ENCODE measurements at regions of chr7 and their contacts with region 1.

Region 1: DNA sequence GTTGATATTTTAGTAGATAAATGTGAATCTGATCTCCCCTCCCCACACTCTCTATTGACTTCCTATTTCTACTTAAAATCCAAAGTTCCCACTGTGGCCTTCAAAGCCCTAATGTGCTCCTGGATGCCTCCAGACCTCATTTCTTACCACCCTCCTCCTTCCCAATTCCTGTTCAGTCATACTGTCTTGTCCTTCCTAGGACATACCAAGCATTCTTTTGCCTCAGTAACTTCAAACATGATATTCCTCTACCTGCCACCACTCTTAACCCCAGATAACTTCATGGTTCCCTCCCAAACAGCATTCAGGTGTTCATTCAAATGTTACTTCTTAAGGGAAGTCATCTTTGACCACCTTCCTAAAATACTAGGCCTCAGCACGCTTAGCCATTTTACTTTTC is 34.2 kb upstream of the FAM221A start:
- DNase-seq: no peak
- H3K27ac ChIP-seq: no peak overlapping the region
- CTCF ChIP-seq: no peak

Region 2: DNA sequence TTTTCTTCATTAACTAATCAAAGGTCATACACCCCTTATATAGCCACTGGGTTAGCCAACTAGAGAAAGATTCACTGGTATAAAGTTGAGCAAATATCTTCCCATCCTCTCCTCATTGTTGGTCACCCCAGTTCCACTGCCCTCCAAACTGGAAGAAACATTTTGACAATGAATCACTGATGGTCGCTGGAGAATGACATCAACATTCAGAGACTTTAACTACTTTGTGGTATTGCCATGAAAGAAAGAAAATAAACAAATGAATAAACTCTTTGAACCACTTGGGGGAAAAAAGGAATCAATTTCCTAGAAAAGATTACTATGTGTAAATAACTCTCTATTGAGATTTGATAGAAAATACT is 655.3 kb before region 1 on chr7:
- CTCF ChIA-PET with region 1: no interaction called
- POLR2A ChIA-PET with region 1: interaction called, 18 read pairs
- DNase-seq: no peak
- H3K27ac ChIP-seq: no peak overlapping the region
- CTCF ChIP-seq: no peak

Region 3: GRCh38 chr7:23863209-23863798 is 217.5 kb after region 1 on chr7:
- CTCF ChIA-PET with region 1: no interaction called
- POLR2A ChIA-PET with region 1: no interaction called
- DNase-seq: peak; percentile 47
- H3K27ac ChIP-seq: no peak overlapping the region
- CTCF ChIP-seq: peak; percentile 81